G401 (cell line): ENCODE measurements at regions of chr17 and their contacts with region 1.

Region 1: GRCh38 chr17:54900457-54901229 is at the start of gene TOM1L1:
- DNase-seq: peak; percentile 78
- total RNA-seq, gene TOM1L1: 6.1 and 13.8 TPM in 2 replicates

Region 2: GRCh38 chr17:54795046-54795445 is 105.6 kb before region 1 on chr17:
- in situ Hi-C with region 1: loop called (anchors 25 kb)
- DNase-seq: no peak

Region 3: GRCh38 chr17:54807331-54807730 is 93.3 kb before region 1 on chr17:
- in situ Hi-C with region 1: no loop called
- DNase-seq: no peak

Region 4: DNA sequence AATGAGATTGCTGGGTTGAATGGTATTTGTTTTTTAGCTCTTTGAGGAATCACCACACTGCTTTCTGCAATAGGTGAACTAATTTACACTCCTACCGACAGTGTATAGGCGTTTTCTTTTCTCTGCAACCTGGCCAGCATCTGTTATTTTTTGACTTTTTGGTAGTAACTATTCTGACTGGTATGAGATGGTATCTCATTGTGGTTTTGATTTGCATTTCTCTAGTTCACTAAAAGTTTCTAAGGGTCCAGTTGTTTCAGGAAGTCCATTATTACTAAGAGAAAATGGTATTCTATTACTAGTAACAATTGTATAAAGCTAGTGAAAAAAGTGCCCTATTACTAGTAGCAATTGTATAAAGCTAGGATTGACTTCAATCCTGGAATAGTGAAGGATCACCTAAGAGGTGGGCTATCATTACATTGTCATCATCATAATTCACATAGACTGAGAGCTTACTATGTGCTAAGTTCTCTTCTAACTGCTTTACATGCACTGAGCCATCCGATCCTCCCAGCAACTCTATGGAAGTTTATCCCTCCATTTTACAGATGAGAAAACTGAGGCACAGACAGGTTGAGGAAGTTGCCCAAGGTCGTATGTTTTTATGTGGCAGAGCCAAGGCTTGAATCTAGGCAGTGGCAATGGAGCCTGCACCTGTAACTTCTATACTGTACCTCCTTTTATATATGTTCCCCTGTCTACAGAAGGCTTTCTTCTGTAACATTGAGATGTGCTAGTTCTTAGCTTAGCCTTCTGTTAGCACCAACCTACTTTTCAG is 624.0 kb after region 1 on chr17:
- in situ Hi-C with region 1: no loop called
- DNase-seq: no peak